ENCODE measurements at regions of chr7 and their contacts with region 1.

Region 1: GRCh38 chr7:133434055-133434865 is 181.4 kb downstream of the EXOC4 start:
- DNase-seq: peak in 1 of 2 donors; percentile 54
- ATAC-seq: peak in 2 of 3 donors; percentile 62 to 66
- H3K4me3 ChIP-seq: no peak overlapping the region
- H3K4me3 Mint-ChIP-seq: no peak overlapping the region
- H3K27ac ChIP-seq: no peak overlapping the region
- H3K27ac Mint-ChIP-seq: peak overlapping the region; percentile 6 to 18
- H3K4me1 ChIP-seq: no peaks in the 10 kb centered on the region
- H3K4me1 Mint-ChIP-seq: peaks cover 14 to 24% of the 10 kb centered on the region in 2 donors
- H3K27me3 ChIP-seq: no peaks in the 10 kb centered on the region
- H3K27me3 Mint-ChIP-seq: no peaks in the 10 kb centered on the region
- CTCF ChIP-seq: peak; percentile 65

Region 2: GRCh38 chr7:132318352-132319318 is 1115.6 kb before region 1 on chr7:
- intact Hi-C with region 1: loop called (anchors 2 kb)
- DNase-seq: peak; percentile 76 to 89
- ATAC-seq: peak; percentile 86 to 99 (median 98)
- H3K4me3 ChIP-seq: no peak overlapping the region
- H3K4me3 Mint-ChIP-seq: no peak overlapping the region
- H3K27ac ChIP-seq: no peak overlapping the region
- H3K27ac Mint-ChIP-seq: no peak overlapping the region
- H3K4me1 ChIP-seq: peaks cover 9% of the 10 kb centered on the region
- H3K4me1 Mint-ChIP-seq: peaks cover 14 to 17% of the 10 kb centered on the region in 2 donors
- H3K27me3 ChIP-seq: peaks cover 4% of the 10 kb centered on the region
- H3K27me3 Mint-ChIP-seq: peaks cover 36 to 38% of the 10 kb centered on the region in 2 donors
- CTCF ChIP-seq: peak; percentile 94

Region 3: DNA sequence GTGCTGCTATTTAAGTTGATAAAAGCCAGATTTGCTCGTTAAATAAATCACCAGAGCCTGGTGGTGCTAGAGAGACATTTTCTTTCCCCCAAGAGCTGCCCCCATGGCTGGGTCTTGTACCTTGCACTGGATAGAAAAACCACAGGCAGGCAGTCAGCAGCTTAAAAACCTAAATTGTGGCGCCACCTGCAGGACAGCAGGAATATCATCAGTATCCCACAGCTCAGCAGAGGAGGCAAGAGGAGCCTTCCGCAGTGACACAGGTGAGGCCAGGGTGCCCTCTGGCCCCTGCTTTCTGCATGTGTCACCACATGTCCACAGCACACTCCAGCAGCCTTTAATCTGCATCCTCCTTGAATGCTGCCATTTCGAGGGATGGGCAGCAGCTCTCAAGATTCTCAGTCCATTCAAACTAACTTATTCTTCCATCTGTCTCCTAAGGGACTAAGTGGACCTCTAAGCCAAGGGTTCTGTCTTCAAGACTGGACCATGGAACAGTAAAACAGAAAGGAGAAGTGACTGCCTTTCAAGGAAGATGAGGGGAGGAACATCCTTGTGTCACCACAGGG is 853.5 kb before region 1 on chr7:
- intact Hi-C with region 1: loop called (anchors 10 kb)
- DNase-seq: peak; percentile 70 to 87
- ATAC-seq: peak; percentile 74 to 80 (median 80)
- H3K4me3 ChIP-seq: no peak overlapping the region
- H3K4me3 Mint-ChIP-seq: no peak overlapping the region
- H3K27ac ChIP-seq: no peak overlapping the region
- H3K27ac Mint-ChIP-seq: no peak overlapping the region
- H3K4me1 ChIP-seq: peaks cover 19% of the 10 kb centered on the region
- H3K4me1 Mint-ChIP-seq: peaks cover 2 to 18% of the 10 kb centered on the region in 2 donors
- H3K27me3 ChIP-seq: peaks cover 18% of the 10 kb centered on the region
- H3K27me3 Mint-ChIP-seq: peaks cover 14 to 27% of the 10 kb centered on the region in 2 donors
- CTCF ChIP-seq: peak; percentile 86

Region 4: GRCh38 chr7:132709971-132710567 is 724.2 kb before region 1 on chr7:
- intact Hi-C with region 1: loop called (anchors 2 kb)
- DNase-seq: peak in 1 of 2 donors; percentile 46
- ATAC-seq: no peak
- H3K4me3 ChIP-seq: no peak overlapping the region
- H3K4me3 Mint-ChIP-seq: no peak overlapping the region
- H3K27ac ChIP-seq: no peak overlapping the region
- H3K27ac Mint-ChIP-seq: no peak overlapping the region
- H3K4me1 ChIP-seq: no peaks in the 10 kb centered on the region
- H3K4me1 Mint-ChIP-seq: no peaks in the 10 kb centered on the region
- H3K27me3 ChIP-seq: no peaks in the 10 kb centered on the region
- H3K27me3 Mint-ChIP-seq: no peaks in the 10 kb centered on the region
- CTCF ChIP-seq: no peak